PC-9 (cell line): ENCODE measurements at regions of chr12 and their contacts with region 1.

Region 1: DNA sequence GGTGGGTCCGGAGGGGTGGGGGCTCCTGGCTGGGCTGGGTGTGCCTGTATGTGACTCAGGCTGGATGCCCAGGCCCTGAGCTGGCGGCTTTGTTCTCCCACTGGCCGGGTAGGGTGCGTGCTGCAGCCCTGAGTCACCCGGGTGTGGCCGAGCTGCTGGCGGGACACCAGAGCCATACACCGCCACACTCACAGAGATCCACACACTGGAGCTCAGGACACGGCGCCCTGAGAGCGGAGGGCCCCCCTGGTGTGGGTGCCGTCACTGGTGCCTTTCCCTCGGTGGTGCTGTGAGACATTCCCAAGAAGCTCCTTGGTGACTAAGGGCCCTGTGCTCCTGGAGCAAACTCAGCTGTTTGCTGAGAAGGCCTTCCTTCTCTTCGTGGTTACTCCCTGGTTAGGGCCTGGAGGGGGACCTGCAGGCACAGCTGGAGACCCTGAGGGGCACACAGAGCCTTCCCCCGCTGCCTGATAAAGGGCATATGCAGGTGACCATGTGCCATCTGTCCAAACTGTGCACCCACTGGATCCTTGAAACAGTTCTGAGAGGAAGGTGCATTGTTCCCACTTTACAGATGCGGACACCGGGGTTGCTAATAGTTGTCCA is 44.3 kb downstream of the KRT80 start:
- DNase-seq: peak; percentile 96 to 99
- H3K4me3 ChIP-seq: peak overlapping the region; percentile 99; the same call in 1 of the 2 replicates
- H3K27ac ChIP-seq: peak overlapping the region; percentile 100
- H3K4me1 ChIP-seq: peaks cover 70% of the 10 kb centered on the region
- H3K27me3 ChIP-seq: no peaks in the 10 kb centered on the region
- CTCF ChIP-seq: no peak

Region 2: GRCh38 chr12:51070004-51070403 is 1077.5 kb before region 1 on chr12:
- CTCF ChIA-PET with region 1: no interaction called
- POLR2A ChIA-PET with region 1: no interaction called
- intact Hi-C with region 1: no loop called
- DNase-seq: peak in 1 of 2 experiments; percentile 83
- H3K4me3 ChIP-seq: no peak overlapping the region
- H3K27ac ChIP-seq: peak overlapping the region; percentile 69
- H3K4me1 ChIP-seq: peaks cover 13% of the 10 kb centered on the region
- H3K27me3 ChIP-seq: no peaks in the 10 kb centered on the region
- CTCF ChIP-seq: no peak

Region 3: DNA sequence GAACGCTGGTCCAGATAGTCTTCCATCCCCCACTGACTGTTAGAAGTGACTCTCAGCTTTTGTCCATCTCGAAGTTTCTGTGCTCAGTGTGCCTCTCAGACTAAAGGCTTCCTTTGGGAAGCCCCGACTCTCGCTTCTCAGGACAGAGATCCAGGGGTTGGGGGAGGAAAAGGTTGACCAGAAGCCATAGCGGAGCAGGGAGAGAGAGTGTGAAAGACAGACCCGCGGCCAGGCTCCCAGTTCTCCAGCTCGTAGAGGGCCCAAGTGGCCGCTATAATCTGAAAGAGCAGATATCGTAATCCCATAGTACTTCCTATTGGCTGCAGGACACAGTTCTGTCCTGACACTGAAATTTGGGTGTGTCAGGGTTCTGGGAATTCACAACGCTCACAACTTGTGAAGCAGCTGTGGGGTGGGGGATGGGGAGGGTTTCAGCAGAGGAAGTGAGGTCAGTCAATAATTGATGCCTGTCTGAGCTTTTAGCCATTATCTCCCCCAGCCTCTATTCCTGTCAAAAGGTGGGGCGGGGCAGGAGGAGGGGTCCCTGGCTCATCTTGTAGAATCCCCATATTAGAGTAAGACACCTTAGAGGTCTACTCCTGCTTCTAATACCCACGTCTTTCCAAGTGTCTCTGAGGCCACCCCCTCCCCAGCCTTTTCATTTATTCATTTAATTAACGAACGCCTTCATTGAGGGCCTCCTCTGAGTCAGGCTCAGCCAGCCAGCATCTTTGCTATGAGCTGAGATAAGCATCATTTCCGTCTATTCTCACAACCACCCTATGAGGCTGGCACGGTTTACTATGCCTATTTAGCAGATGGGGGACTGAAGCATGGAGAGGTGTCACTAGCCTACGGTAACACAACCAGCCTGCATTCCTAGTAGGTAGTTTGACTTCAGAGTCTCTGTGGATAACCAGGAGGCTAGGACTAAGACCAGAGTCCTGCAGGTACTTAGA is 241.7 kb before region 1 on chr12:
- CTCF ChIA-PET with region 1: no interaction called
- POLR2A ChIA-PET with region 1: no interaction called
- intact Hi-C with region 1: no loop called
- DNase-seq: no peak
- H3K4me3 ChIP-seq: no peak overlapping the region
- H3K27ac ChIP-seq: no peak overlapping the region
- H3K4me1 ChIP-seq: no peaks in the 10 kb centered on the region
- H3K27me3 ChIP-seq: peaks cover 70% of the 10 kb centered on the region
- CTCF ChIP-seq: no peak

Region 4: DNA sequence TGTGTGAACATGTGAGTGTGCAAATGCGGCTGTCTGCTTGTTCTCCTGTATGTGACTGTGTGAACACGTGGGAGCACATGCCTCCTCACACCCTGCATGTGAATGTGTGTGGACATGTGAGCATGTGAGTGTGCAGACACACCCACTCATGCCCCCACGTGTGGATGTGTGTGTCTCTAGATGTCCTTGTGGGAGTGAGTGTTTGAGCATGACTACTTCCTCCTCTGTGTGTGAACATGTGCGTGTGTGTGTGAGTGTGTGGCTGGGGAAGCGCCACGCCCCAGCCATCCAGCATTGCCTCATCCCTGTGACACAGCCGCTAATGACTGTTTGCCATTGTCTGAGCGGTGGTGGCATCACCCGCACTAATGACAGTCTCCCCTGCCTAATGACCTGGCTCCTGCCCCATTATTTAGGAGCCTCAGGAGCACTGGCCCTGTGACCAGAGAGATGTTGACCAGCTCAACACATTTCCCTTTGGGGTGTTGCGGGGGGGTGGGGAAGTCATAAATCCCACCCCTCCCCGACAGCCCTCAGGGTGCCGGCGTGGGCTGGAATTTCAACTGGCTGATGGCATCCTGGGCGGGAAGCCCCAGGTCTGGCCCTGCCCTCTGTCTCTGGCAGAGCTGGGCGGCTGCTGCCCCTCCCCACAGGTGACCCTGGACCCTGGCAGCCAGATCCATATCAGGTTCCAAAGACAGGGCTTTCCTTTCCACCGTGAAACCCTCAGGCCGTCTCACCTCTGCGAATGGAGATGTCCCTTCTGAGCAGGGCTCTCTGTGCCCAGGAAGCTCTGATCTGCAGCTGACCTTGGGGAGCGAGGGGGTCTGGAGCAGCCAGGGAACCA is 55.8 kb after region 1 on chr12:
- CTCF ChIA-PET with region 1: no interaction called
- POLR2A ChIA-PET with region 1: interaction called, 34 read pairs
- intact Hi-C with region 1: no loop called
- DNase-seq: peak; percentile 77 to 78
- H3K4me3 ChIP-seq: no peak overlapping the region
- H3K27ac ChIP-seq: peak overlapping the region; percentile 47; the same call in 1 of the 2 replicates
- H3K4me1 ChIP-seq: peaks cover 71% of the 10 kb centered on the region
- H3K27me3 ChIP-seq: no peaks in the 10 kb centered on the region
- CTCF ChIP-seq: no peak

Region 5: DNA sequence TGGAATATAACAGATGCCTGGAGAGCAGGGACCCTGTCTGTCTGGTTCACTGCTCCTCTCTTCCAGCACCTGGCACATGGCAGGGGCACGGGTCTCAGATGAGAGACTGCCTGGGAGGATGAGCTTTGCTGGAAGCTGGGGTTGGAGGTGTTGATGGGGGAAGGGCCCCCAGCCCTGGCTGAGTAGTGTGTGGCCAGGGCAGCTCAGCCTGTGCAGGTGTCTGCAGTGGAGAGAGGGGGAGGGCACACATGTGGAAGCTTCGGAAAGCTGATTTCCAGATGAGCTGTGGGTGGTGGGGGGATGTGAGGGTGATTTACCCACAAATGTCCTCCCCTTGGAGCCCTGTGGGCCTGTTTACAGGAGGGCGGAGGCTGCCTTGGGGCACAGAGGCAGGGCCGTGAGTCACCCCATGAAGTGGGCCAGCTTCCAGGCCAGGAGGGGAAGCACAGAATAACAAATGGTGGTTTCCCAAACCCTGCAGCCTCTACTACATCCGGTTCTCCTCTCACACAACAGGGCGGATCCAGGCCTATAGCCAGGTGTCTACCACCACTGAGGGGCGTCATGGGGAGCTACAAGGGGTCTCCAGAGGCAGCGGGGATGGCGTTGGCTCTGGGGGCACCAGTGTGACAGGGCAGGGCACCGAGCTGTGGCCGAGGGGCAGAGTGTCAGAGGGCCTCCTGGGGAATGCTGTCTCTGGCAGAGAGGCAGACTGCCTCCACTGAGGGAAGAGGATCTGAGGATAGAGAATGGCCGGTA is 96.6 kb after region 1 on chr12:
- CTCF ChIA-PET with region 1: no interaction called
- POLR2A ChIA-PET with region 1: interaction called, 21 read pairs
- intact Hi-C with region 1: no loop called
- DNase-seq: peak; percentile 89 to 95
- H3K4me3 ChIP-seq: 0 out of 2 replicates have a peak overlapping the region, but pooled peaks have one; percentile 7
- H3K27ac ChIP-seq: peak overlapping the region; percentile 90
- H3K4me1 ChIP-seq: peaks cover 99% of the 10 kb centered on the region
- H3K27me3 ChIP-seq: no peaks in the 10 kb centered on the region
- CTCF ChIP-seq: no peak; the same call in 1 of the 2 replicates

Region 6: GRCh38 chr12:52522346-52523011 is 375.0 kb after region 1 on chr12:
- CTCF ChIA-PET with region 1: no interaction called
- POLR2A ChIA-PET with region 1: interaction called, 4 read pairs
- intact Hi-C with region 1: loop called (anchors 1 kb)
- DNase-seq: peak; percentile 78 to 87
- H3K4me3 ChIP-seq: peak overlapping the region; percentile 31; the same call in 1 of the 2 replicates
- H3K27ac ChIP-seq: peak overlapping the region; percentile 96
- H3K4me1 ChIP-seq: peaks cover 66% of the 10 kb centered on the region
- H3K27me3 ChIP-seq: no peaks in the 10 kb centered on the region
- CTCF ChIP-seq: no peak

Region 7: GRCh38 chr12:52903285-52903854 is 755.9 kb after region 1 on chr12:
- CTCF ChIA-PET with region 1: no interaction called
- POLR2A ChIA-PET with region 1: interaction called, 25 read pairs
- intact Hi-C with region 1: no loop called
- DNase-seq: no peak
- H3K4me3 ChIP-seq: peak overlapping the region; percentile 97
- H3K27ac ChIP-seq: peak overlapping the region; percentile 93
- H3K4me1 ChIP-seq: peaks cover 69% of the 10 kb centered on the region
- H3K27me3 ChIP-seq: no peaks in the 10 kb centered on the region
- CTCF ChIP-seq: no peak

Region 8: GRCh38 chr12:52969828-52970569 is 822.5 kb after region 1 on chr12:
- CTCF ChIA-PET with region 1: no interaction called
- POLR2A ChIA-PET with region 1: interaction called, 24 read pairs
- intact Hi-C with region 1: loop called (anchors 1 kb)
- DNase-seq: peak; percentile 90 to 98
- H3K4me3 ChIP-seq: peak overlapping the region; percentile 28; the same call in 1 of the 2 replicates
- H3K27ac ChIP-seq: peak overlapping the region; percentile 99
- H3K4me1 ChIP-seq: peaks cover 67% of the 10 kb centered on the region
- H3K27me3 ChIP-seq: no peaks in the 10 kb centered on the region
- CTCF ChIP-seq: no peak